Brain microvascular endothelial cell (primary cell): ENCODE measurements at regions of chr1 and their contacts with region 1.

Region 1: DNA sequence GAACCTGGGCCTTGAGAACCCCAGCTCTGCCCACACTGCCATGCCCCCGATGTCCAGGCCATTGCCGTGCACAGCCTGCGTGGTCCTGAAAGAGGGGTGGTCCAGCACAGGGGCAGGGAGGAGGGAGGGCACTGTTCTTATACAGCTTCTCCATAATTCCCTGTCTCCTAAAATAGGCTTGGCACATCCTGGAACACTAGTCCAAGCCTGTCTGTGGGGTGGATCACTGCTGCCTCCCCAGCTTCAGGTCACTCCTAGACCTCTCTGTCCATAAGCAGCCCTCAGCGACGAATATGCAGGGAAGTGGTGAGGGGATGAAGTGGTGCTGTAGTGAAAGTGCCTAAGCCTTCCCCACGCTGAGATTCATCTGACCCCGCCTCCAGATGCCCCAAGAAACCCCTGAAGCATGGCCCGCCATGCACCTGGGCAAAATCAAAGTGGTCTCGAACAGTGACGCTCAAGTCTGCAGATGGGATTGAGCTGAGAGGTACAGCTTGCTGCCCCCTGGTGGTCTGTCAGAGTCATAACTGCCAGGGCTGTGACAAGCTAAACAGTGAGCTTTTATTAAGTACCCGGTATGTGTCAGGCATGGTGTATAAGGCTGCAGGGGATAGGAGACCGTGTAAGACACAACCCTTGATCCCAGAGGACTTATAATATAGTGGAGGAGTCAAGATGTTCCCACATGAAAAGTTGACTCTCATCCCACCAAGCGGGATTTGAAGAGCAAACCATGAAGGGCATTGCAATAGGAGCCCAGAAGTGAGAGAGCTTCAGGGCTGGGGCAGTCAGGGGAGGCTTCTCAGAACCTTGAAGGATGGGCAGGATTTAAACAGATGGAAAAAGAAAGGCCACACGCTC is 66.6 kb downstream of the FAM163A start:
- DNase-seq: peak; percentile 76
- H3K4me3 ChIP-seq: no peak overlapping the region
- H3K27ac ChIP-seq: no peak overlapping the region
- H3K27me3 ChIP-seq: peaks cover 53% of the 10 kb centered on the region
- CTCF ChIP-seq: peak; percentile 96

Region 2: DNA sequence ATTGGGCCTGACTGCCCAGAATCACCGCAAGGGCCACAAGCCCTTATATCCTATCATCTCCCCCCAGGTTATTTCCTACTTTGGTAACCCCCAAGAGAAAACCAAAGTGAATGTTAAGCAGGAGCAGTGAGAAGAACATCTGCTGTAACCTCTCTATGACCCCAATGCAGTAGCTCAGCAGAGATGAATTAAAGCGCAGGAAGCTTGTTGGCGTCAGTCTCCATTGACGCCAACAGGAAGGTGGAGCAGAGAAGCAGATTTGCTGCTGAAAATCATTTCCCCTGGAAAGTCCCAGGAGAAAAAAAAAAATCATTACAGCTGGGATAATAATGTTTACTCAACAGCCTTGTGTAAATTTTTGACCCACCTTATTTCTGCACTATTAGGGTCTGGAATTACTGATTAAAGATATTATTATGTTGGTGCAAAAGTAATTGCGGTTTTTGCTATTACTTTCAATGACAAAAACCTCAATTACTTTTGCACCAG is 99.9 kb before region 1 on chr1:
- in situ Hi-C with region 1: loop called (anchors 10 kb)
- DNase-seq: peak; percentile 80
- H3K4me3 ChIP-seq: no peak overlapping the region
- H3K27ac ChIP-seq: peak overlapping the region; percentile 59
- H3K27me3 ChIP-seq: peaks cover 2% of the 10 kb centered on the region
- CTCF ChIP-seq: no peak